Right ventricle myocardium superior (tissue), 1 donor: ENCODE measurements at regions of chr9 and their contacts with region 1.

Region 1: GRCh38 chr9:21985964-21986667 is 8.1 kb downstream of the CDKN2A start:
- DNase-seq: no peak
- ATAC-seq: no peak

Region 2: GRCh38 chr9:21919377-21920362 is 66.4 kb before region 1 on chr9:
- intact Hi-C with region 1: loop called (anchors 10 kb)
- DNase-seq: no peak
- ATAC-seq: no peak